PC-3 (cell line): ENCODE measurements at regions of chr10 and their contacts with region 1.

Region 1: DNA sequence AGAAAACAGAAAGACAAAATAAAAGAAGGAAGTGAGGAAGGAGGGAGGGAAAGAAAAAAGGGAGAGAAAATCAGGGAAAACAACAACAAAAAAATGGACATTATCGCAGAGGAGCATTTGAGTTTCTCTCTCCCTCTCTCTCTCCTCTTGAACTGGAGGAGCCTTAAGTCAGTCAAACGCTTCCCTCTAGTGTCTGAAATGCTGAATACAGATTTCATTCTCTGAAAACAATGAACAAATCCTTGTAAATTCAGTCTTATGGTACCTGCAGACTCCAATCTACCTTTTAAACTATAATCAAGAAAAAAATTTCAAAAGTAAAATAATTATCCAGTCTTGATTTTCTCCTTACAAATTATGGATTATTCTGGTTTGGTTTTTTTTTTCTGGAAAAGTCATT is 89.2 kb upstream of the PFKP start:
- DNase-seq: peak; percentile 59
- ATAC-seq: peak; percentile 51; the same call in 1 of the 2 replicates
- H3K4me3 ChIP-seq: no peak overlapping the region
- H3K27ac ChIP-seq: no peak overlapping the region
- H3K4me1 ChIP-seq: no peaks in the 10 kb centered on the region
- H3K27me3 ChIP-seq: no peaks in the 10 kb centered on the region
- CTCF ChIP-seq: peak; percentile 60

Region 2: GRCh38 chr10:2913474-2913873 is 64.6 kb before region 1 on chr10:
- CTCF ChIA-PET with region 1: no interaction called
- POLR2A ChIA-PET with region 1: no interaction called
- intact Hi-C with region 1: no loop called
- DNase-seq: no peak
- ATAC-seq: no peak
- H3K4me3 ChIP-seq: no peak overlapping the region
- H3K27ac ChIP-seq: no peak overlapping the region
- H3K4me1 ChIP-seq: no peaks in the 10 kb centered on the region
- H3K27me3 ChIP-seq: no peaks in the 10 kb centered on the region
- CTCF ChIP-seq: no peak

Region 3: GRCh38 chr10:2927958-2928840 is 49.9 kb before region 1 on chr10:
- CTCF ChIA-PET with region 1: no interaction called
- POLR2A ChIA-PET with region 1: no interaction called
- intact Hi-C with region 1: loop called (anchors 10 kb)
- DNase-seq: peak; percentile 54
- ATAC-seq: peak; percentile 55
- H3K4me3 ChIP-seq: no peak overlapping the region
- H3K27ac ChIP-seq: no peak overlapping the region
- H3K4me1 ChIP-seq: no peaks in the 10 kb centered on the region
- H3K27me3 ChIP-seq: no peaks in the 10 kb centered on the region
- CTCF ChIP-seq: peak; percentile 62

Region 4: DNA sequence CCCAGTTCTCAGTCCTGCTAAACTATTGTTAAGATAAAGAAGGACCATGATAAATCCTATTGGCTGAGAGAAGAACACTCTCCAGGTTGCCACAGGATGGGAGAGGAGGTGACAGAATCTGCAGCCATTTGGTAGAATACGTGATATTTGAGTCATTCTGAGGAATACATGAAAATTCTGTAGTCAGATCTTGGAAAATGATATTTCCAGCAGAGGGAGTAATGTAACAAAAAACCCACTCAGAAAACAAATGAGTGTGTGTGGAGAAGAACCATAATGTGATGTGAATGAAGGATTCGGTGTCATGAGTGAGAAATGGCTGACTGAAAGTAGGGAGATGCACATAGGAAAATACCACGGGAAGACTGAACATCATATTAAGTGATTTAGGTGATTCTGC is 39.2 kb before region 1 on chr10:
- CTCF ChIA-PET with region 1: no interaction called
- POLR2A ChIA-PET with region 1: no interaction called
- intact Hi-C with region 1: loop called (anchors 1 kb)
- DNase-seq: peak; percentile 25
- ATAC-seq: peak; percentile 42; the same call in 1 of the 2 replicates
- H3K4me3 ChIP-seq: no peak overlapping the region
- H3K27ac ChIP-seq: no peak overlapping the region
- H3K4me1 ChIP-seq: no peaks in the 10 kb centered on the region
- H3K27me3 ChIP-seq: peaks cover 22% of the 10 kb centered on the region
- CTCF ChIP-seq: peak; percentile 42; the same call in 1 of the 2 replicates

Region 5: DNA sequence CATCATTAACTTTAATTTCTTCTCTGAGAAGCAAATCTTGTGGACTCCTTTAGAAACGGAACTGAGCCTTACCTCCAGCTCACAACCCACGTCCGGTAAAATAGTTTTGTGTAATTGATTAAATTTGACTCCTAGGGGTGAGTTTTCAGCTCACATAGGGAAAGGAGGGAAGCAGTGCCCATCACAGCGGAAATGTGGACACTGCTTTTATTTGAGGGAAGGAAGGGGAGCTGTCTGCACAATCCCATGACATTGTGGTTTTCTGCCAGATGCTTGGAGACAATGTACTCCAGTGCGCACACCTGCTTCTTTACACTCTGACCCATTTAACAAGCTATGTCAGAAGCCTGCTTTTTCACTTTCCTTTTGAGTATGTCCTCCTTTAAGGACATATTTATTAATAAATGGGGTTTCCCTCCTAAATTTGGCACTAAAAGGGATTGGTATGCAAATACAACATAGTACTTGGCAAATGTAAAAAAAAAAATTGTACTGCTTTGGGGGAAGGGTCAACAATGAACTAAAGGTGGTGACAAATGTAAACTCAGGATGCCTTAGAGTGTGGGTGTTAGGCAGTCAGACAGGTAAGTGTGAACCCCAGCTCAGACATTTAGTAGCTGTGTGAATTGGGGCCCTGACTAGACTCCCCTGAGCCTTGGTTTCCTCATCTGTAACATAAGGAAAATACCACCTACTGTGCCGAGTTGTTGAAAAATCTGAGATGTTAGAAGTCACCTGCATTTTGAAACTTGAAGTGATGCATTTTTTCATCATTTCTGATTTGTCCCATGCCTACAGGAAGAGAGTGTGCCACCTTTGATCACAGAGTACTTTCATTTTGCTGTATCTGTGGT is 897.1 kb after region 1 on chr10:
- CTCF ChIA-PET with region 1: no interaction called
- POLR2A ChIA-PET with region 1: no interaction called
- intact Hi-C with region 1: no loop called
- DNase-seq: no peak
- ATAC-seq: no peak
- H3K4me3 ChIP-seq: no peak overlapping the region
- H3K27ac ChIP-seq: no peak overlapping the region
- H3K4me1 ChIP-seq: no peaks in the 10 kb centered on the region; the same call in 1 of the 2 replicates
- H3K27me3 ChIP-seq: no peaks in the 10 kb centered on the region
- CTCF ChIP-seq: no peak